ENCODE measurements at regions of chr12 and their contacts with region 1.

Region 1: DNA sequence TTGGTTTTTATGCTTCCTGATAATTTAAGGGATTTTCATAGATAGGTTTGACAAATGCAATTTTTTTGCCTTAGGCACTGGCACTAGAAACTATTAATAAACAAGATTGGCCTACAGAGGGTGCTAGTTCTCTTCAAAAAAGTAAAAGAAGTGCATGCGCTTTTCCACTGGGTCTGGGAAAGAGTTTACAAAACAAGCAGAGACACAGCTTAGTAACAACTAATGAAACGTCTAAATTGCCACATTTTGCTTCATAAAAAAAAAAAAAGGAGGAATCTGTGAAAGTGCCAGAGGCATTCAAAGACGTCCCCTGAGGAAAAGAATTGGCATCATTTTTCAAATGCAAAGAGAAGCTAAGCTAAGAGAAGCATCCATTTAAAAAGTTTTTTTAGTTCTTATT is 58.3 kb upstream of the EEA1 start:
- DNase-seq: peak in 1 of 2 donors; percentile 34
- ATAC-seq: peak; percentile 39 to 90 (median 86)
- H3K4me3 ChIP-seq: no peak overlapping the region
- H3K27ac ChIP-seq: peak overlapping the region in 9 of 10 donors; percentile 30 to 77 (median 52)
- H3K4me1 ChIP-seq: peaks cover 0 to 21% (median 9%) of the 10 kb centered on the region in 9 donors
- H3K27me3 ChIP-seq: no peaks in the 10 kb centered on the region
- CTCF ChIP-seq: peak; percentile 39 to 77 (median 63)

Region 2: GRCh38 chr12:92784795-92785562 is 202.4 kb before region 1 on chr12:
- intact Hi-C with region 1: loop called in 2 of 10 experiments (anchors 10 kb)
- DNase-seq: peak in 1 of 2 donors; percentile 23
- ATAC-seq: peak; percentile 76 to 94 (median 90)
- H3K4me3 ChIP-seq: no peak overlapping the region
- H3K27ac ChIP-seq: peak overlapping the region in 3 of 10 donors; percentile 0 to 11 (median 3)
- H3K4me1 ChIP-seq: peaks cover 0 to 30% (median 11%) of the 10 kb centered on the region in 9 donors
- H3K27me3 ChIP-seq: no peaks in the 10 kb centered on the region
- CTCF ChIP-seq: peak; percentile 26 to 73 (median 61)

Region 3: DNA sequence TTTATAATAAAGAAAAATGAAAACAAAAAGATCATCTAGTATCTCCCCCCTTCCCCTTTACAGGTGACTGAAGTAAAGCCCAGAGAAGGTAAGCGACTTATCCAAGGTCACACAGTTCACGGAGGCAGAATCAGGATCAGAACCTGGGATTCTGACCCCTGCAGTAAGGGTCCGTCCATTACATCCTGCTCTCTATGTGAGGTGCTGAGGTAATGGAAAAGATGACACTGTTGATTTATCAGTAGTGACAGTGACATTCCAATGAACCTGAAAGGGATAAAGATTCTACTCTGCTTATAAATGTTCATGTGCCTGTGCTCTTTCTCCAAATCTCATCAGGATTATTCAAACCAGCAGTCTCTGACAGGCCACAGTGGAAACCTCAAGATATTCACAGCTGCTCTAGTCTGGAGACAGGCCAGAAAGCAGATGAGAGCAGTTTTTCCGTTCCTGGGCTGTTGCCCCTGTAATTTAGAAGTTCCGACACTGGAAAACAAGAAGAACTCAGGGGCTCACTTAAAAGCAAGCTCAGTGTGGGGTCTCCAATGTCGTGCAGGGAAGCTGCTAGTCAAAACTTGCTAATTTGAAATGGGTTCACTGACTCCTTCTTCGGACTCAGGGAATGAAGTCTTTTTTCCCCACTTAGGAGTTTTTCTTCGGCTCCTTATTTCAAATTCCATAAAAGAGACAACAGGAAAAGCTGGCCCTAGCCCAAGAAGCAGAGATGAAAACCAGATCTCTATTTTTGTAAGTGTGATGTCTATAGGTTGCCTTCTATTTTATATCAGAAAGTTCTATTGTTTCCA is 73.5 kb after region 1 on chr12:
- intact Hi-C with region 1: loop called in 1 of 10 experiments (anchors 2 kb)
- DNase-seq: peak in 1 of 2 donors; percentile 61
- ATAC-seq: peak; percentile 15 to 79 (median 74)
- H3K4me3 ChIP-seq: peak overlapping the region in 4 of 10 donors; percentile 4 to 13 (median 9)
- H3K27ac ChIP-seq: peak overlapping the region; percentile 61 to 88 (median 78)
- H3K4me1 ChIP-seq: peaks cover 14 to 36% (median 26%) of the 10 kb centered on the region in 9 donors
- H3K27me3 ChIP-seq: no peaks in the 10 kb centered on the region
- CTCF ChIP-seq: peak in 5 of 9 donors; percentile 12 to 33 (median 18)

Region 4: GRCh38 chr12:93127582-93128331 is 140.4 kb after region 1 on chr12:
- intact Hi-C with region 1: loop called in 4 of 10 experiments (anchors 1 to 5 kb)
- DNase-seq: peak; percentile 72 to 82
- ATAC-seq: peak; percentile 85 to 96 (median 92)
- H3K4me3 ChIP-seq: peak overlapping the region in 2 of 10 donors; percentile 2 to 3
- H3K27ac ChIP-seq: peak overlapping the region; percentile 74 to 89 (median 79)
- H3K4me1 ChIP-seq: peaks cover 2 to 45% (median 12%) of the 10 kb centered on the region in 9 donors
- H3K27me3 ChIP-seq: no peaks in the 10 kb centered on the region
- CTCF ChIP-seq: peak in 8 of 9 donors; percentile 15 to 49 (median 42)

Region 5: GRCh38 chr12:93347054-93347776 is 359.9 kb after region 1 on chr12:
- intact Hi-C with region 1: no loop called
- DNase-seq: no peak
- ATAC-seq: peak in 2 of 8 donors; percentile 20 to 42
- H3K4me3 ChIP-seq: no peak overlapping the region
- H3K27ac ChIP-seq: no peak overlapping the region
- H3K4me1 ChIP-seq: peaks cover 0 to 9% (median 0%) of the 10 kb centered on the region in 9 donors
- H3K27me3 ChIP-seq: no peaks in the 10 kb centered on the region
- CTCF ChIP-seq: no peak

Region 6: GRCh38 chr12:93397412-93397811 is 410.1 kb after region 1 on chr12:
- intact Hi-C with region 1: loop called in 9 of 10 experiments (anchors 2 to 10 kb)
- DNase-seq: no peak
- ATAC-seq: no peak
- H3K4me3 ChIP-seq: no peak overlapping the region
- H3K27ac ChIP-seq: peak overlapping the region in 1 of 10 donors; percentile 59
- H3K4me1 ChIP-seq: peaks cover 0 to 23% (median 17%) of the 10 kb centered on the region in 9 donors
- H3K27me3 ChIP-seq: no peaks in the 10 kb centered on the region
- CTCF ChIP-seq: no peak

Region 7: DNA sequence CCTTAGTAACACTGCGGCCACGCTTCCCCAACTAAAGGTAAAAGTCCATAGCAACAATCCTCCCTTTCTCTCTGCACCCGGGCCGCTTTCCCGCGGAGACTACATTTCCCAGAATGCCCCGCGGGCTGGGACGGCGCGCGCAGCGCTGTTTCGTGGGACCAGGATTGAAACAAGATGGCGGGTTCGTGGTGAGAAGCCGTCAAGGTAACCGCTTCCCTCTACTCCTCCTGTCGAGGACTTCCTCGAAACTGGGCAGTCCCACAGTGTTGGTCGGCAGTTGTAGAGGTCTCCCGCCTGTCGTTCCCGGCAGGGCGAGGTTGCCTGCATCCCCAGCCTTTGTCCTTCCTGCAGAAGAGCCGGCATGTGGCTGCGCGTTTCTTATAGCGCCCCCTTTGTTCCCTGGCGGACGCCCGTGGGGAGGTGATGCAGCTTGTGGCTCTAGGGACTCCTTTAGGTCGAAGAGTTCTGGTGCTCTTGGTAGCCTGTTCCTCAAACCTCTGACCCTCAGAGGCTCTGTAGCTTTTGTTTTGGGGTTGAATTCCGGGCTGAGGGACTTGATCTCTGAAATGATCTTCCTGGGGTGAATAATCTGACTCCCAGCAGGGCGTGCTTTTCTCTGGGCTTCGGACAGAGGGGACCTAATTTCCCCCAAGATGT is 480.1 kb after region 1 on chr12 and contains the start of gene MRPL42:
- intact Hi-C with region 1: loop called in 1 of 10 experiments (anchors 5 kb)
- DNase-seq: peak; percentile 90 to 91
- ATAC-seq: peak; percentile 96 to 98 (median 98)
- H3K4me3 ChIP-seq: peak within 1 kb of the TSS; percentile 52 to 90 (median 68)
- H3K27ac ChIP-seq: peak within 1 kb of the TSS in 9 of 10 donors; percentile 81 to 97 (median 89)
- H3K4me1 ChIP-seq: peaks cover 0 to 33% (median 23%) of the 10 kb centered on the region in 9 donors
- H3K27me3 ChIP-seq: no peaks in the 10 kb centered on the region
- CTCF ChIP-seq: peak; percentile 47 to 96 (median 70)
- total RNA-seq, gene MRPL42: 34.1 to 59.6 (median 45.7) TPM